ENCODE measurements at regions of chr7 and their contacts with region 1.

Region 1: DNA sequence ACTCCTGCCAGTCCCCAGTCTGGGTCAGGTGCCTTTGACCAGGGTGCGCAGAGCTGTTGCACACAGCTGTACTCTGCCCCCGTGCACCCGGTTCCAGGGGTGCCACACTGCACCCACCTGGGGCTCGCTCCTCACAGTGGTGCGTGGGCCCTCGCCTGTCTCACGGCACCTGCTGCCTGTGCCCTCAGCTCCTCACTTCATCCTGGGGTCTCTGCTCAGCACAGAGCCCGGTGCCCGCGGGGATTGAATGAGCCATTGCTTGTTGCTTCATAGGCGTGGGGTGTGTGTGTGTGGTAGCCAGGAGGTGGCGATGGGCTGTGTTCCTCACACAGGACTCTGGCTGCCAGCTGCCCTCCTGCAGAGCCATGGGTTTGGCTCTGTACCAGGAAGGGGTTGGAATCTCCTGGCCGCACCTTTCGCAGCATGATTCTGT is 18.5 kb downstream of the EIF3B start:
- DNase-seq: no peak
- ATAC-seq: peak; percentile 43
- H3K4me3 ChIP-seq: no peak overlapping the region
- H3K27ac ChIP-seq: no peak overlapping the region
- H3K4me1 ChIP-seq: no peaks in the 10 kb centered on the region
- H3K27me3 ChIP-seq: no peaks in the 10 kb centered on the region
- CTCF ChIP-seq: no peak

Region 2: DNA sequence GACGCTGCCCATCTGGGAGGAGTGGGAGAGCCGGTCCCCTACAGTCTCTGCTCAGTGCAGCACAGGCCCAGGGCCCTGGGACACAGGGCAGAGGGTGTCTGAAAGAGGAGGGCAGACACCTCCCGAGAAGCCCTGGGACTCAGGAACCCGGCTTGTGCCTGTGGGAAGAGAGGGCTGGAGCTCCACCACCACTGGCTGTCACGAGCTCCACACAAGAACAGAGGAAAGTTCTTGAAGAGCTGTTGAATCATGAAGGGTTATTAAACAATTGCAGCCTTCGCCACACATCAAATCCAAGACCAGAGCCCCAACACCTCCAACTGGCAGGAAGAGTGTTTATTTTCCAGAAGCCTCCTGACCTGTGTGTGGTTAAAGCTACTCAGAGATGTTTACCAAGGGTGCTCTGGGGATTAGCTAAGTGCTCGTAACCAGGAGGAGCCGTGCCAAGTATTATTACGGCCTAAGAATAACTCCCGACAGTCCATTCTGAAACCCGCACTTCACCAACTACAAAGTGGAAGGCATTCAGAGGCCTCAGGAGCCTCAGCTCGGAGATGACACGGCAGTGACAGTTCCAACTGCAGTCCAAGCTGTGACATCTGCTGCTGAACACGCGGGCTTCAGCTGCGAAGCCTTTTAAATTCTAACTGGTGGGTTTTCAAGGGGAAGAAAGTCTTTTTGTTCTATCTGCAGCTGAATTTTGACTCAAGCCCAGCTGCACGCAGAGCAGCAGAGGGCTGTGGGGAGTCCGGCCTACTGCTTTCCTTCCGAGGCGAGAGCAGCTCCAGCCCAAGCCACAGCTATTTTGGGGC is 215.5 kb before region 1 on chr7:
- CTCF ChIA-PET with region 1: no interaction called
- POLR2A ChIA-PET with region 1: no interaction called
- in situ Hi-C with region 1: no loop called
- intact Hi-C with region 1: no loop called
- DNase-seq: peak; percentile 32
- ATAC-seq: peak; percentile 90
- H3K4me3 ChIP-seq: no peak overlapping the region
- H3K27ac ChIP-seq: 0 out of 2 replicates have a peak overlapping the region, but pooled peaks have one; percentile 19
- H3K4me1 ChIP-seq: peaks cover 27% of the 10 kb centered on the region
- H3K27me3 ChIP-seq: no peaks in the 10 kb centered on the region
- CTCF ChIP-seq: no peak

Region 3: GRCh38 chr7:2403718-2404648 is 30.8 kb after region 1 on chr7:
- CTCF ChIA-PET with region 1: interaction called, 12 read pairs
- POLR2A ChIA-PET with region 1: no interaction called
- in situ Hi-C with region 1: no loop called
- intact Hi-C with region 1: no loop called
- DNase-seq: no peak
- ATAC-seq: peak; percentile 63
- H3K4me3 ChIP-seq: peak overlapping the region; percentile 73 to 83
- H3K27ac ChIP-seq: peak overlapping the region; percentile 75
- H3K4me1 ChIP-seq: peaks cover 26% of the 10 kb centered on the region
- H3K27me3 ChIP-seq: no peaks in the 10 kb centered on the region
- CTCF ChIP-seq: no peak

Region 4: DNA sequence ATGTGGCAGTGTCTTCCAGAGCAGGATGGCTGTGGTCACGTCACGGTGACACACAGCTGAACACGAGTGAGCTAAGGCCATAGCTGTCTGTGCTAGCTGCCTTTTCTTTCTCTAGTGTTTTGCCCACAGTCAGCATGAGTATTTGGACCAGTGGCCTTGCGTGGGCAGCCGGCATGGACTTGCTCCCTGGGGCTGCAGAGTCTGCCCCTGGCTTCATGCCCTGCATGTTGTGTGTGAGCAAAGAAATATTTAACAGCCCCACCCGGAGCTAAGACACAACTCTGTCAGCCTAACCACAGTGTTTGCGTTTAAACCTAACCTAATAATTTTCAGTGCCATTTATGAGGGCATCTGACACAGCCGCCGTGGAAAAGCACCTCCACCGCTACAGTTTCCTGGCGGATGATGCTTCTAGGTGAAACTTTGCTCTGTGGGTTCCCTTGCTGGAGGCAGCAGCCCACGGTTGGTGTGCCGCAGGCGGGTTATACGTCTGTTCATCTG is 44.9 kb after region 1 on chr7:
- CTCF ChIA-PET with region 1: no interaction called
- POLR2A ChIA-PET with region 1: no interaction called
- in situ Hi-C with region 1: no loop called
- intact Hi-C with region 1: no loop called
- DNase-seq: no peak
- ATAC-seq: peak; percentile 31; the same call in 1 of the 2 replicates
- H3K4me3 ChIP-seq: no peak overlapping the region
- H3K27ac ChIP-seq: no peak overlapping the region
- H3K4me1 ChIP-seq: peaks cover 3% of the 10 kb centered on the region; the same call in 1 of the 2 replicates
- H3K27me3 ChIP-seq: no peaks in the 10 kb centered on the region
- CTCF ChIP-seq: no peak

Measured in Panc1 (cell line).